ENCODE measurements at regions of chr18 and their contacts with region 1.

Region 1: GRCh38 chr18:62500174-62500573 is 22.7 kb upstream of the ZCCHC2 start:
- DNase-seq: no peak
- ATAC-seq: peak; percentile 17; the same call in 1 of the 3 replicates
- H3K4me3 ChIP-seq: no peak overlapping the region
- H3K27ac ChIP-seq: peak overlapping the region; percentile 47
- H3K4me1 ChIP-seq: peaks cover 48% of the 10 kb centered on the region
- H3K27me3 ChIP-seq: no peaks in the 10 kb centered on the region
- CTCF ChIP-seq: no peak
- EP300 ChIP-seq: no peak
- POLR2A ChIP-seq: no peak
- RAD21 ChIP-seq: no peak

Region 2: GRCh38 chr18:62037989-62038778 is 462.0 kb before region 1 on chr18:
- CTCF ChIA-PET with region 1: no interaction called
- POLR2A ChIA-PET with region 1: no interaction called
- in situ Hi-C with region 1: no loop called
- intact Hi-C with region 1: no loop called
- DNase-seq: no peak
- ATAC-seq: no peak
- H3K4me3 ChIP-seq: no peak overlapping the region
- H3K27ac ChIP-seq: no peak overlapping the region
- H3K4me1 ChIP-seq: no peaks in the 10 kb centered on the region
- H3K27me3 ChIP-seq: no peaks in the 10 kb centered on the region
- CTCF ChIP-seq: no peak
- EP300 ChIP-seq: no peak
- POLR2A ChIP-seq: no peak
- RAD21 ChIP-seq: no peak

Region 3: DNA sequence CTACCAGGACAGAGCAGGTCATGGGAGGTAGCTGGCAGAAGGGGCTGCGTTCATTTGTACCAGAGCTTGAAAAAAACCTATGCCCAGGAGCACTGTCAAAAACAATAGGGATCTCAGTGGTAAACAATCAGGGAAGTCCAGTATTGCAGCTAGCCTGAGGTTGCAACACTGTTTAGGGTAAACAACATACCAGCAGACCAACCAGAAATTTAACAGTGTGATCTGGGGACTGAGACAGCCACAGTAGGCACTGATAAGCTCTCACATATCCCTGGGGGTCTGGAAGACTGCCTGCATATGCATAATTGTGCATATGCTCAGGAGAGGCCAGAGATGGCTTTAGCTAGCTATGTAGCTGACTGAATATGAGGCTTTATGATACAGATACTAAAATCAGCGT is 10.6 kb after region 1 on chr18:
- CTCF ChIA-PET with region 1: no interaction called
- POLR2A ChIA-PET with region 1: interaction called, 11 read pairs
- in situ Hi-C with region 1: no loop called
- intact Hi-C with region 1: no loop called
- DNase-seq: peak; percentile 72
- ATAC-seq: peak; percentile 94
- H3K4me3 ChIP-seq: no peak overlapping the region; a peak in 1 of 6 replicates
- H3K27ac ChIP-seq: peak overlapping the region; percentile 74
- H3K4me1 ChIP-seq: peaks cover 50% of the 10 kb centered on the region
- H3K27me3 ChIP-seq: no peaks in the 10 kb centered on the region
- CTCF ChIP-seq: no peak
- EP300 ChIP-seq: peak in 1 of 2 experiments; percentile 60; a peak in 1 of 4 replicates
- POLR2A ChIP-seq: 0 out of 4 replicates have a peak, but pooled peaks of 1 of the 2 experiments have one; percentile 27
- RAD21 ChIP-seq: no peak

Measured in HepG2 (cell line).